ENCODE measurements at regions of chr15 and their contacts with region 1.

Region 1: DNA sequence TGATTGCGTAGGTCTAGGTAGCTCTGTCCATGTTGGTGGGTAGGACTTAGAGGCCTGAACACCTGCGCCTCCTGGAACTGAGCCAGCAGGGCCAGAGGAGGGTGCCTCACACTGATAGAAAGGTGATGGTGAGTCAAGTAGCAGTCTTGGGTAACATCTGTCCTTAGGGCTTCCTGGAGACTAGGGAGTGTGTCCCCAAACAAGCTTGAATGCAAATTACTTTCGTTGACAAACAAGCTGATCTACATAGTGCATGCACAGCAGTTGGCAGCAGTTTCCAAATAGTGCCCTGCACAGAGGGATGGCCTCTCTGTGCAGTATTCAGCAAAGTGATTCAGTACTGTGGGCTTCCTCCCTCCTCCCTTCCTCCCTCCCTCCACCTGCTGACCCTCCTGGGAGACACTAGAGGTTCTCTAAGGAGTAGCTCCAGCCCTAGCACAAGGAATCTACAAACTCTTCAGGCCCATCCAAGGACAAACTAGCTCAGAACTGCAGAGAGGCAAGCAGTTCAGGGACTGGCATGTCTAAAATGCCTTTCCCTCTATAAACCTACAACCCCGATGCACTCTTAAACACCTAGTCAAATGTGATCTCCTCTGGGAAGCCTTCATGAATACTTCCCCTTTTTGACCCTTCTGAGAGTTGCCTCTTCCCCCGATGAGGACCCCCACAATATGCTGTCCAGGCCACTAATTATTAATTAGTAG is 61.0 kb downstream of the TLE3 start:
- DNase-seq: no peak
- ATAC-seq: peak; percentile 55
- H3K4me3 Mint-ChIP-seq: peak overlapping the region; percentile 76
- H3K27ac Mint-ChIP-seq: peak overlapping the region; percentile 91
- H3K4me1 Mint-ChIP-seq: peaks cover 67% of the 10 kb centered on the region
- H3K27me3 Mint-ChIP-seq: no peaks in the 10 kb centered on the region
- CTCF ChIP-seq: no peak

Region 2: DNA sequence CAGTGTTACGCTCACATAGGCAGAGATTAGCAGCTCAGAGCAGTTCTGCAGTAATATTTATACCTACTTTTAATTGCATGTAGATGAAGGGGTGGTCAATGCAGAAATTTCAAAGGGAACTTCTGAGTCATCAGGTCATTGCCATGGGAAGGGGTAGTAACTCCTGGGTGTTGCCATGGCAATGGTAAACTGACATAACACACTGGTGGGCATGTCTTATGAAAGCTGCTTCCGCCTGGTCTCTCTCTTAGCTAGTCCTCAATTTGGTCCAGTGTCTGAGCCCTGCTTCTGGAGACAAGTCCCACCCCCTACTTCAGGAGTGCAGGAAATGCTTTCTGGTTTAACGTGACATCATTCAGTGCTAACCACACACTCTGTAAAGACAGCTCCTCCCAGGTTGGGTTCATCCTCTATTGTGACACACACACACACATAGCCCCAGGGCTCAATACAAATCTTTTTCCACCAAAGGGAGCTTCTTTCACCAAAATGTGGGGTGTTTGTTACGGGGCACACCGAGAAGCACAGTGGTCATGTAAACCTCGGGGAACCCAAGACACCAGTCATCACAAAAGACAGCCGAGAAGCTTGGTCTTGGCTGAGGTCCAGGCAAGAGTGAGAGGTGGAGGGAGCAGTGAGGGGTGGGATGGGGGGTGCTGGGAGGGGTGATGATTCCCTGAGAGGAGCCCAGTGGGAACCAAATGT is 13.5 kb before region 1 on chr15:
- CTCF ChIA-PET with region 1: no interaction called
- POLR2A ChIA-PET with region 1: interaction called, 22 read pairs
- intact Hi-C with region 1: loop called (anchors 1 kb)
- DNase-seq: no peak
- ATAC-seq: peak; percentile 76
- H3K4me3 Mint-ChIP-seq: peak overlapping the region; percentile 21
- H3K27ac Mint-ChIP-seq: peak overlapping the region; percentile 75
- H3K4me1 Mint-ChIP-seq: peaks cover 46% of the 10 kb centered on the region
- H3K27me3 Mint-ChIP-seq: peaks cover 2% of the 10 kb centered on the region
- CTCF ChIP-seq: no peak

Region 3: DNA sequence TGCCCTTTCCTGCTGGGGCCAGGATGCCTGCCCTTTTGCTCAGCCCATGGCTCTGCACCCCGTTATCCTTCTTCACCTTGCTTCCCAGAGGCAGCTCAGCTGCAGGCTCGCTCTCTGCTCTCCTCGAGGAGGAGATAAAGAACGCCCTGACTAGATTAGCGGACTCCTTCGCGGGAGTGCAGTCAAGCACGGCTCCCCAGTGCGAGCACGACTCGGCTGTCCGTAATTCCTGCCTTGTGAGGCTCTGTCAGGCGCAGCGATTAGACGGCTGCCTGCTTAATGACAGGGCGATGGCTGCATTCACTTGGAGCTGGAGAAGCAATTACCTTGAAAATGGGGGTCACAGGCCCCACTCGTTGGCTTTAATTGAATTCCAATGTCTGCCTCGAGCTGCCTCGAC is 35.1 kb after region 1 on chr15:
- CTCF ChIA-PET with region 1: no interaction called
- POLR2A ChIA-PET with region 1: interaction called, 3 read pairs
- intact Hi-C with region 1: loop called (anchors 5 kb)
- DNase-seq: no peak
- ATAC-seq: peak; percentile 59
- H3K4me3 Mint-ChIP-seq: no peak overlapping the region
- H3K27ac Mint-ChIP-seq: peak overlapping the region; percentile 56
- H3K4me1 Mint-ChIP-seq: peaks cover 50% of the 10 kb centered on the region
- H3K27me3 Mint-ChIP-seq: no peaks in the 10 kb centered on the region
- CTCF ChIP-seq: no peak

Region 4: GRCh38 chr15:70259028-70259424 is 222.3 kb after region 1 on chr15:
- CTCF ChIA-PET with region 1: no interaction called
- POLR2A ChIA-PET with region 1: no interaction called
- intact Hi-C with region 1: no loop called
- DNase-seq: no peak
- ATAC-seq: peak; percentile 40
- H3K4me3 Mint-ChIP-seq: peak overlapping the region; percentile 73
- H3K27ac Mint-ChIP-seq: peak overlapping the region; percentile 53
- H3K4me1 Mint-ChIP-seq: peaks cover 65% of the 10 kb centered on the region
- H3K27me3 Mint-ChIP-seq: no peaks in the 10 kb centered on the region
- CTCF ChIP-seq: no peak